ENCODE measurements at regions of chr1 and their contacts with region 1.

Region 1: GRCh38 chr1:169601093-169601881 is 15.0 kb upstream of the F5 start:
- DNase-seq: no peak
- ATAC-seq: peak; percentile 38
- H3K4me3 Mint-ChIP-seq: no peak overlapping the region
- H3K27ac Mint-ChIP-seq: peak overlapping the region; percentile 72
- H3K4me1 Mint-ChIP-seq: peaks cover 56% of the 10 kb centered on the region
- H3K27me3 Mint-ChIP-seq: no peaks in the 10 kb centered on the region

Region 2: DNA sequence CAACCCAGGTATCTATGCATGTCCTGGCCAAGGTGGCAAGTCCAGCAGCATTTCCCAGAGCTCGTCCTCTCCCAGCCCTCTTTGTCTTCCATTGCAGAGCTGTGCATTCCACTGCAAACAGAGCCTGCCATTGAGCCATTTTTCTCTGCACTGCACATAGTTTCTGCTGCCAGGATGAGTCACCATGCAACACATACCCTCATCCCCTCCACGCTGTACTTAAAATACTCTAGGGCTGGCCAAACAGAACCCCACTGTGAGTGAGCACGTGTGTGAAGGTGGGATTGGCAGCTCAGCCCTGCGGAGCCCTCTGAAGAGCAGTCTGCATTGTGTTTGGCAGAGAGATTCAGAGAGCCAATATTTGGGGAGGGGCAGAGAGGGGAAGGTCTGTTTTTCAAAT is 498.7 kb before region 1 on chr1:
- CTCF ChIA-PET with region 1: no interaction called
- POLR2A ChIA-PET with region 1: no interaction called
- intact Hi-C with region 1: no loop called
- DNase-seq: no peak
- ATAC-seq: no peak
- H3K4me3 Mint-ChIP-seq: no peak overlapping the region
- H3K27ac Mint-ChIP-seq: no peak overlapping the region
- H3K4me1 Mint-ChIP-seq: peaks cover 11% of the 10 kb centered on the region
- H3K27me3 Mint-ChIP-seq: peaks cover 14% of the 10 kb centered on the region

Region 3: GRCh38 chr1:169615803-169616202 is 14.5 kb after region 1 on chr1:
- CTCF ChIA-PET with region 1: interaction called, 33 read pairs
- POLR2A ChIA-PET with region 1: no interaction called
- intact Hi-C with region 1: no loop called
- DNase-seq: no peak
- ATAC-seq: no peak
- H3K4me3 Mint-ChIP-seq: no peak overlapping the region
- H3K27ac Mint-ChIP-seq: no peak overlapping the region
- H3K4me1 Mint-ChIP-seq: peaks cover 28% of the 10 kb centered on the region
- H3K27me3 Mint-ChIP-seq: no peaks in the 10 kb centered on the region

Region 4: GRCh38 chr1:169644298-169644697 is 43.0 kb after region 1 on chr1:
- CTCF ChIA-PET with region 1: interaction called, 4 read pairs
- POLR2A ChIA-PET with region 1: no interaction called
- intact Hi-C with region 1: loop called in 1 of 2 experiments (anchors 5 kb)
- DNase-seq: no peak
- ATAC-seq: no peak
- H3K4me3 Mint-ChIP-seq: no peak overlapping the region
- H3K27ac Mint-ChIP-seq: no peak overlapping the region
- H3K4me1 Mint-ChIP-seq: peaks cover 37% of the 10 kb centered on the region
- H3K27me3 Mint-ChIP-seq: no peaks in the 10 kb centered on the region

Region 5: GRCh38 chr1:169680377-169681019 is 79.2 kb after region 1 on chr1:
- CTCF ChIA-PET with region 1: interaction called, 15 read pairs
- POLR2A ChIA-PET with region 1: no interaction called
- intact Hi-C with region 1: no loop called
- DNase-seq: peak; percentile 80
- ATAC-seq: peak; percentile 84
- H3K4me3 Mint-ChIP-seq: peak overlapping the region; percentile 57
- H3K27ac Mint-ChIP-seq: peak overlapping the region; percentile 95
- H3K4me1 Mint-ChIP-seq: peaks cover 64% of the 10 kb centered on the region
- H3K27me3 Mint-ChIP-seq: no peaks in the 10 kb centered on the region

Measured in activated CD4-positive, alpha-beta T cell treated with anti-CD3 and anti-CD28 coated beads for 36 hours (primary cell).